BJ (cell line): ENCODE measurements at regions of chr16 and their contacts with region 1.

Region 1: GRCh38 chr16:58533751-58534470 is 18.6 kb downstream of the SETD6 start:
- DNase-seq: no peak
- H3K4me3 ChIP-seq: no peak overlapping the region
- H3K27me3 ChIP-seq: no peaks in the 10 kb centered on the region
- CTCF ChIP-seq: no peak

Region 2: DNA sequence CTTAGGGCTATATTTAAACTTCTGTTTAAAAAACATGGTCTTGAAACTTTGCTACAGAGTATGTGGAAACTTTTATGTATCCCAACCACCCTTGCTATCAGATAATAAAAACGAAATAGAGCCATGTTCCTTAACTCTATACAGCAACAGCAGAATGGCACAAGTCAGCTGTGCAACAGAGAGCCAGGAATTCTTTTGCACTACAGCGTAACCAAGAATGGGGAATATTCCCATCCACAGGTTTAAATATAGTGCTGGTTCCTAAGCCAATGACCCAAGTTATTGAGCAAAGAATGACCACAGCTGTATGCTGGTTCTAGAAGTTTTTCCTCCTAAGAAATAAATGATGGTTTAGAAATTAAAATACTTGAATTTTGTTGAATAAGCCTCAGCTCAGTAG is 14.5 kb after region 1 on chr16:
- CTCF ChIA-PET with region 1: no interaction called
- POLR2A ChIA-PET with region 1: no interaction called
- DNase-seq: no peak
- H3K4me3 ChIP-seq: no peak overlapping the region
- H3K27me3 ChIP-seq: no peaks in the 10 kb centered on the region
- CTCF ChIP-seq: no peak

Region 3: DNA sequence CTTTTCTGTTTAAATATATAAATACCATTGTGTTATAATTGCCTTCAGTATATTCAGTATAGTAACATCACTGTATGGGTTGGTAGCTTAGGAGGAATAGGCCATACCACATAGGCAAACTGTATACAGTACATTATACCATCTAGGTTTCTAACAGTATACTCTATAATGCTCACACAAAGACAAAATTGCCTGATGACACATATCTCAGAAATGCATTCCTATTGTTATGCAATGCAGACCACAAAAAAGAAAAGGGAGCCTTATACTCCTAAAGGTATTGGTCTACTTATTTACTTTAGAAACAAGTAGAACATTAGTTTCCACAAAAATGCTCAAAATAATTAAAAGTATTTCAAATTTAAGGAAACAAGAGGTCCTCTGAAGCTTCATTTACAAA is 29.3 kb after region 1 on chr16:
- CTCF ChIA-PET with region 1: no interaction called
- POLR2A ChIA-PET with region 1: interaction called, 40 read pairs
- DNase-seq: peak; percentile 15
- H3K4me3 ChIP-seq: no peak overlapping the region
- H3K27me3 ChIP-seq: no peaks in the 10 kb centered on the region
- CTCF ChIP-seq: no peak